Heart left ventricle (tissue), 16 donors: ENCODE measurements at regions of chr2 and their contacts with region 1.

Region 1: DNA sequence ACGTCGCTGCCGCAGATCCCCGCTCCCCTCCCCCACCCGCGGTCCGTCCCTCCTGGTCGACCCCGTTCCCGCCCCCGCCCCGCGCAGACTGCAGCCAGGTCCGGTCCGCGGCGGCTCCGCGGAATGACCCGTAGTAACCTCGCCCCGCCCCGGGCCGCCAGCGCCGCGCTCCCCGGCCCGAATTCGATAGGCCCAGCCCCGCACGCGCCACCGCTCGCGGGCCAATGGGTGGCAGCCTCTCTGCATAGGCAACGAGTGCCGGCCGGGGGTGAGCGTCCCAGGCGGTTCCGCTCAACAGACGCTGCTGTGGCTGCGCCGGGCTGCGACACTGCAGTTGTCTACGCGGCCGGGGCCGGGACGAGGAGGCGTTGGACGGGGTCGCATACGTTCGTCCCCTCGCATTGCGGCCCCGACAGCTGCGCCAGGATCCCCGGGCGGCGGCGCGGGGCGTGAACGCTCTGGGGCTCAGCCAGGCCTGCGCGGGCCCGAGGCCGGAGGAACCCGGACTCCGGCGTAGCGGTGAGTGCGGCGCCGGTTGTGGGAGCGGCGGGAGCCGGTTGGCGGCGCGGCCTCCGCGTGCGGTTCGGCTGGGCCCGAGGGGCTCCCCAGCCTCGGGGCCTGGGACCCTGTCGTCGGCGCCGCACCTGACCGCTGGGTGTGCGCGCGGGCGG is at the start of gene ACSL3:
- DNase-seq: peak; percentile 97 to 99 (median 98)
- ATAC-seq: peak; percentile 89 to 99 (median 96)
- H3K4me3 ChIP-seq: peak within 1 kb of the TSS; percentile 74 to 99 (median 93)
- H3K27ac ChIP-seq: peak within 1 kb of the TSS; percentile 93 to 100 (median 98)
- H3K4me1 ChIP-seq: peaks cover 7 to 54% (median 41%) of the 10 kb centered on the region in 12 donors
- H3K27me3 ChIP-seq: no peaks in the 10 kb centered on the region
- CTCF ChIP-seq: peak in 4 of 12 donors; percentile 20 to 45 (median 27)
- POLR2A ChIP-seq: peak; percentile 93 to 99
- total RNA-seq, gene ACSL3: 44.5 to 56.8 (median 52.4) TPM

Region 2: GRCh38 chr2:222690564-222691200 is 170.2 kb before region 1 on chr2:
- intact Hi-C with region 1: loop called in 1 of 10 experiments (anchors 5 kb)
- DNase-seq: peak; percentile 53 to 78 (median 62)
- ATAC-seq: peak in 3 of 4 donors; percentile 77 to 86 (median 84)
- H3K4me3 ChIP-seq: no peak overlapping the region
- H3K27ac ChIP-seq: no peak overlapping the region
- H3K4me1 ChIP-seq: peaks cover 0 to 17% (median 1%) of the 10 kb centered on the region in 12 donors
- H3K27me3 ChIP-seq: no peaks in the 10 kb centered on the region
- CTCF ChIP-seq: peak; percentile 86 to 100 (median 96)
- POLR2A ChIP-seq: no peak

Region 3: GRCh38 chr2:222753251-222753824 is 107.5 kb before region 1 on chr2:
- intact Hi-C with region 1: loop called in 3 of 10 experiments (anchors 5 kb)
- DNase-seq: peak in 4 of 5 donors; percentile 46 to 72 (median 53)
- ATAC-seq: peak; percentile 95 to 97 (median 96)
- H3K4me3 ChIP-seq: no peak overlapping the region
- H3K27ac ChIP-seq: peak overlapping the region in 11 of 12 donors; percentile 5 to 66 (median 38)
- H3K4me1 ChIP-seq: peaks cover 0 to 30% (median 19%) of the 10 kb centered on the region in 12 donors
- H3K27me3 ChIP-seq: no peaks in the 10 kb centered on the region
- CTCF ChIP-seq: no peak
- POLR2A ChIP-seq: no peak

Region 4: GRCh38 chr2:222797261-222797660 is 63.6 kb before region 1 on chr2:
- intact Hi-C with region 1: loop called in 8 of 10 experiments (anchors 2 to 10 kb)
- DNase-seq: no peak
- ATAC-seq: peak in 1 of 4 donors; percentile 42
- H3K4me3 ChIP-seq: no peak overlapping the region
- H3K27ac ChIP-seq: peak overlapping the region in 5 of 12 donors; percentile 19 to 61 (median 30)
- H3K4me1 ChIP-seq: peaks cover 0 to 37% (median 23%) of the 10 kb centered on the region in 12 donors
- H3K27me3 ChIP-seq: no peaks in the 10 kb centered on the region
- CTCF ChIP-seq: peak in 10 of 12 donors; percentile 28 to 55 (median 46)
- POLR2A ChIP-seq: no peak

Region 5: DNA sequence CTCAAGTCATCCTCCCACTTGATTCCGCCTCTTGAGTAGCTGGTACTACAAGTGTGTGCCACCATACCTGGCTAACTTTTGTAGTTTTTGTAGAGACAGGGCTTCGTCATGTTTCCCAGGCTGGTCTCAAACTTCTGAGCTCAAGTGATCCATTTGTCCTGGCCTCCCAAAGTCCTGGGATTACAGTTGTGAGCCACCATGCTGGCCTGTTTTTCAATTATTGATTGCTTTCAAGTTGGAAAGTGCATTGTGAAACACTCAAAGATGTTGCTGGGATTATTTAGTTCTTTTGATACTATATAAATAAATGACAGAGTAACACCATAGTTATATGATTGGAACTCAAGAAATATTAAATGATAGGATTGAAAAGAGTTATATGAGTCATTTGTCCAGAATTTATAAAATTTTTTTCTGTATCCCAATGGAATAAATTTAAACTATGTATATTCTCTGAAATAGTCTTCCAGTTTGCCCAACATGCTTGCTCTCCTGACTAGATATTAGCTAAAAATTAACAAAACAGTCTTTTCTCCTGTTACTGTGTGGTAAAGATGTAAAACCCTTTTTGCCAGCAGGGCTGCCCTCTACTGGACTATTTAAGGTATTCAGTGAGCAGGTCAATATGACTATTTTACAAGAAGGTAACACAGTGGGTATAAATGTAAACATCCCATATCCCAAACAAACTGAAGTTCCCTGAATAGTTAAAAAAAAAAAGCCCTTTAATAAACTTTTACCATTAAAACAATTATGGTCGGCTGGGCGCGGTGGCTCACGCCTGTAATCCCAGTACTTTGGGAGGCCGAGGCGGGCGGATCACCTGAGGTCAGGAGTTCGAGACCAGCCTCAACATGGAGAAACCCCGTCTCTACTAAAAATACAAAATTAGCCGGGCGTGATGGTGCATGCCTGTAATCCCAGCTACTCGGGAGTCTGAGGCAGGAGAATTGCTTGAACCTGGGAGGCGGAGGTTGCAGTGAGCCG is 42.7 kb after region 1 on chr2:
- intact Hi-C with region 1: loop called in 5 of 10 experiments (anchors 2 to 5 kb)
- DNase-seq: no peak
- ATAC-seq: peak; percentile 38 to 67 (median 58)
- H3K4me3 ChIP-seq: no peak overlapping the region
- H3K27ac ChIP-seq: no peak overlapping the region
- H3K4me1 ChIP-seq: peaks cover 0 to 77% (median 19%) of the 10 kb centered on the region in 12 donors
- H3K27me3 ChIP-seq: no peaks in the 10 kb centered on the region
- CTCF ChIP-seq: peak; percentile 56 to 82 (median 72)
- POLR2A ChIP-seq: no peak

Region 6: DNA sequence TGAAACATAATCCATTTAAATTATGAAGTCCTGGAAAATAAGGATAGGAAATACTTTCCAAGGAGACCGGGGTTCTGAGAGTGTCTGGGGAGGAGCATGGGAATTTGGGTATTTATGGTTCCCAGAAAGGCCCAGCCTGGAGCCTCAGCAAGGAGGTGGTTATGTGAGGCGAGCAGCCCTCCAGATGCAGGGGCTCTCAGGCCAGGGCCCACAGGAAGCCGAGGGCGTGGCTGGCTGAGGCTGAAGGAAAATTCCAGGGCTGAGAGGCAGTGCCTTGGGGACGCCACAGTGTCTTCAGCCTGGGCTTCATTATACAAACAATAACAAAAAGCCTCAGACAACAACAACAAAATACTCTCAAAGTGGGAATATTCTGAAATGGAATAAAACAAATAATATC is 1265.1 kb after region 1 on chr2:
- intact Hi-C with region 1: no loop called
- DNase-seq: peak; percentile 66 to 84 (median 77)
- ATAC-seq: peak; percentile 70 to 95 (median 81)
- H3K4me3 ChIP-seq: no peak overlapping the region
- H3K27ac ChIP-seq: peak overlapping the region in 8 of 12 donors; percentile 17 to 69 (median 50)
- H3K4me1 ChIP-seq: peaks cover 0 to 30% (median 5%) of the 10 kb centered on the region in 12 donors
- H3K27me3 ChIP-seq: no peaks in the 10 kb centered on the region
- CTCF ChIP-seq: no peak
- POLR2A ChIP-seq: no peak